Gastrocnemius medialis (tissue), 4 donors: ENCODE measurements at regions of chr9 and their contacts with region 1.

Region 1: GRCh38 chr9:124940693-124941453 is at the start of gene GOLGA1:
- DNase-seq: peak; percentile 91 to 96
- ATAC-seq: peak; percentile 87 to 91
- H3K4me3 ChIP-seq: peak within 1 kb of the TSS; percentile 63 to 85 (median 80)
- H3K27ac ChIP-seq: peak within 1 kb of the TSS; percentile 91 to 95 (median 93)
- H3K4me1 ChIP-seq: peaks cover 17 to 21% of the 10 kb centered on the region in 2 donors
- H3K27me3 ChIP-seq: no peaks in the 10 kb centered on the region
- CTCF ChIP-seq: no peak
- POLR2A ChIP-seq: peak; percentile 80 to 83
- total RNA-seq, gene GOLGA1: 12.2 to 20.5 (median 18.6) TPM

Region 2: GRCh38 chr9:124868511-124869465 is 72.1 kb before region 1 on chr9:
- in situ Hi-C with region 1: loop called in 1 of 4 experiments (anchors 5 kb)
- intact Hi-C with region 1: loop called (anchors 1 kb)
- DNase-seq: peak; percentile 82 to 86
- ATAC-seq: peak; percentile 82 to 90
- H3K4me3 ChIP-seq: peak overlapping the region; percentile 80 to 100 (median 88)
- H3K27ac ChIP-seq: peak overlapping the region; percentile 93 to 100 (median 96)
- H3K4me1 ChIP-seq: peaks cover 51 to 52% of the 10 kb centered on the region in 2 donors
- H3K27me3 ChIP-seq: no peaks in the 10 kb centered on the region
- CTCF ChIP-seq: peak in 1 of 5 experiments; percentile 3
- POLR2A ChIP-seq: peak; percentile 96 to 99

Region 3: DNA sequence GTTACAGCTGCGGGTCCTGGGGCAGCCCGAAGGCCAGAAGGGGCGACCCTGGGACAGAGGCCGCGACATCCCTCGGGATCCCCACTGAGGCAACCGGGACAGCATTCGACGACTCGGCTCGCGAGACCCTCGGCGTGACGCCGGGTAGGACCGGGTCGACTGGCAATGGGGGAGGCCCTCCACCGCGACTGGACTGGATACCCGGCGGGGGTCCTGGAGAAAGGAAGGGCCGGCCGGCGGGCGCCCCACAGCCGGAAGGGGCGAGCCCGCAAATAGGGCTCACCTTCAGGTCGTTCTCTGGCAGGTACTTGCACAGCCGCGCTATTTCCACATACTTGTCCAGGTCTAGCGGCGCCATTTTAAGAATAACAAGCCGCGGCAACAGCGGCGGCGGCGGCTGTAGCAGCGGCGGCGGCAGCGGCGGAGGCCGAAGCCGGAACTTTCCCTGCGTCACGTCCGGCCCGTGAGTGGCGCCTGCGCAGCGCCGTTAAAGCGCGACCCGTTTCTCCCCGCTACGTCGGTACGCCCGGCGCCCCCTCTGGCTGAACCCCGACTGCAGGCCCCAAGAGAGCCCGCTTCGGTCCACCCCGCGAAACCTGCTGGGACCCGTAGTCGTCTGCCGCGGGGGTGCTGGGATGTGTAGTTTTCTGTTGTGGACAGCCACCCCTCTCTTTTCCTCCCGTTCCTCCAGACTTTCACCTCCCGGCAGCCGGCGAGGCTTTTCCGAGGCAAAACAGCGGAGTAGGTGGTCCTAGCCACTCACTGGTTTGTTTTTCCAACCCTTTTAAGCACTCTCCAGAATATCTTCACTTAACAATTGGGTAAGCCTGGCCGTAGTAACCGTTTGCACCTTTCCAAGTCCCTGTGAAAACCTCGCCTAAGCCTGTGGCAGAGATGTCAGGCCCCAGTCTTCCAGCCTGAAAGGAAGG is 248.8 kb after region 1 on chr9 and contains the start of gene PPP6C:
- in situ Hi-C with region 1: no loop called
- intact Hi-C with region 1: loop called (anchors 1 kb)
- DNase-seq: peak; percentile 96 to 98
- ATAC-seq: peak; percentile 91 to 94
- H3K4me3 ChIP-seq: peak within 1 kb of the TSS; percentile 70 to 100 (median 97)
- H3K27ac ChIP-seq: peak within 1 kb of the TSS; percentile 89 to 100 (median 98)
- H3K4me1 ChIP-seq: peaks cover 39 to 44% of the 10 kb centered on the region in 2 donors
- H3K27me3 ChIP-seq: no peaks in the 10 kb centered on the region
- CTCF ChIP-seq: peak in 4 of 5 experiments; percentile 68 to 75 (median 70)
- POLR2A ChIP-seq: peak; percentile 93 to 96
- total RNA-seq, gene PPP6C: 49.4 to 80.6 (median 73.6) TPM

Region 4: GRCh38 chr9:125241000-125241862 is 300.4 kb after region 1 on chr9 and contains the start of gene HSPA5:
- in situ Hi-C with region 1: no loop called
- intact Hi-C with region 1: loop called (anchors 5 kb)
- DNase-seq: peak; percentile 100
- ATAC-seq: peak; percentile 97 to 98
- H3K4me3 ChIP-seq: peak within 1 kb of the TSS; percentile 88 to 98 (median 92)
- H3K27ac ChIP-seq: peak within 1 kb of the TSS; percentile 91 to 99 (median 96)
- H3K4me1 ChIP-seq: peaks cover 41 to 47% of the 10 kb centered on the region in 2 donors
- H3K27me3 ChIP-seq: no peaks in the 10 kb centered on the region
- CTCF ChIP-seq: peak in 1 of 5 experiments; percentile 38
- POLR2A ChIP-seq: peak; percentile 96 to 99
- total RNA-seq, gene HSPA5: 39.9 to 69.3 (median 46.0) TPM